Prostate gland (tissue), 2 donors: ENCODE measurements at regions of chr16 and their contacts with region 1.

Region 1: GRCh38 chr16:54171626-54172525 is 114.7 kb downstream of the IRX3 start:
- DNase-seq: no peak
- H3K4me3 ChIP-seq: no peak overlapping the region
- H3K27ac ChIP-seq: no peak overlapping the region
- H3K4me1 ChIP-seq: no peaks in the 10 kb centered on the region
- H3K27me3 ChIP-seq: no peaks in the 10 kb centered on the region
- CTCF ChIP-seq: no peak
- POLR2A ChIP-seq: no peak

Region 2: GRCh38 chr16:53892155-53892554 is 279.7 kb before region 1 on chr16:
- intact Hi-C with region 1: loop called (anchors 10 kb)
- DNase-seq: peak; percentile 55
- H3K4me3 ChIP-seq: no peak overlapping the region
- H3K27ac ChIP-seq: no peak overlapping the region
- H3K4me1 ChIP-seq: no peaks in the 10 kb centered on the region
- H3K27me3 ChIP-seq: no peaks in the 10 kb centered on the region
- CTCF ChIP-seq: peak in 3 of 4 experiments; percentile 58 to 68 (median 60)
- POLR2A ChIP-seq: no peak

Region 3: DNA sequence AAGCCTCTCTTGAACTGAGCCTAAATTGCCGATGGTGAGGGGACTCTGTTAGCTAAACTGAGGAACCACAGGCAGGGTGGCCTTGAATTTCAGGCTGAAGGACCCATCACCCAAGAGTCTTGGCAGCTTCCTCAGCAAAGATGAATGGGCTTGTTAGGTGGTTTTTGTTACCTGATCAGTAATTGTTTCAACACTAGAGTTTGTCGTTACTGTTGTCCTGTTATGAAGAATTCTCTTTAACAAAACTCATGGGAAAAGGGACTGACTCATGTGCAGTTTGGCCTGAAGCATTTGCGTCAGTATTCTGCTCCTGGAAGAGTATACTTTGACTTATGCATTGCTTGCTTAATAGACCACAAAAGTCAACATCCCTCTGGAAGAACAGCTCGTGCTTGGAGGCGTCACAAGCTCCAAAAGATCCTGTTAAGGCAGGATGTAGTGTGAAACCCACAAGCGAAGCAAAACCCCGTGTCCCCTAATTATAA is 91.3 kb before region 1 on chr16:
- intact Hi-C with region 1: no loop called
- DNase-seq: peak; percentile 92
- H3K4me3 ChIP-seq: no peak overlapping the region
- H3K27ac ChIP-seq: peak overlapping the region; percentile 81
- H3K4me1 ChIP-seq: peaks cover 6% of the 10 kb centered on the region
- H3K27me3 ChIP-seq: no peaks in the 10 kb centered on the region
- CTCF ChIP-seq: no peak
- POLR2A ChIP-seq: no peak

Region 4: GRCh38 chr16:54098247-54098646 is 73.6 kb before region 1 on chr16:
- intact Hi-C with region 1: no loop called
- DNase-seq: no peak
- H3K4me3 ChIP-seq: no peak overlapping the region
- H3K27ac ChIP-seq: no peak overlapping the region
- H3K4me1 ChIP-seq: no peaks in the 10 kb centered on the region
- H3K27me3 ChIP-seq: no peaks in the 10 kb centered on the region
- CTCF ChIP-seq: no peak
- POLR2A ChIP-seq: no peak

Region 5: GRCh38 chr16:54123766-54124165 is 48.1 kb before region 1 on chr16:
- intact Hi-C with region 1: no loop called
- DNase-seq: no peak
- H3K4me3 ChIP-seq: no peak overlapping the region
- H3K27ac ChIP-seq: no peak overlapping the region
- H3K4me1 ChIP-seq: no peaks in the 10 kb centered on the region
- H3K27me3 ChIP-seq: no peaks in the 10 kb centered on the region
- CTCF ChIP-seq: no peak
- POLR2A ChIP-seq: no peak